ENCODE measurements at regions of chr7 and their contacts with region 1.

Region 1: DNA sequence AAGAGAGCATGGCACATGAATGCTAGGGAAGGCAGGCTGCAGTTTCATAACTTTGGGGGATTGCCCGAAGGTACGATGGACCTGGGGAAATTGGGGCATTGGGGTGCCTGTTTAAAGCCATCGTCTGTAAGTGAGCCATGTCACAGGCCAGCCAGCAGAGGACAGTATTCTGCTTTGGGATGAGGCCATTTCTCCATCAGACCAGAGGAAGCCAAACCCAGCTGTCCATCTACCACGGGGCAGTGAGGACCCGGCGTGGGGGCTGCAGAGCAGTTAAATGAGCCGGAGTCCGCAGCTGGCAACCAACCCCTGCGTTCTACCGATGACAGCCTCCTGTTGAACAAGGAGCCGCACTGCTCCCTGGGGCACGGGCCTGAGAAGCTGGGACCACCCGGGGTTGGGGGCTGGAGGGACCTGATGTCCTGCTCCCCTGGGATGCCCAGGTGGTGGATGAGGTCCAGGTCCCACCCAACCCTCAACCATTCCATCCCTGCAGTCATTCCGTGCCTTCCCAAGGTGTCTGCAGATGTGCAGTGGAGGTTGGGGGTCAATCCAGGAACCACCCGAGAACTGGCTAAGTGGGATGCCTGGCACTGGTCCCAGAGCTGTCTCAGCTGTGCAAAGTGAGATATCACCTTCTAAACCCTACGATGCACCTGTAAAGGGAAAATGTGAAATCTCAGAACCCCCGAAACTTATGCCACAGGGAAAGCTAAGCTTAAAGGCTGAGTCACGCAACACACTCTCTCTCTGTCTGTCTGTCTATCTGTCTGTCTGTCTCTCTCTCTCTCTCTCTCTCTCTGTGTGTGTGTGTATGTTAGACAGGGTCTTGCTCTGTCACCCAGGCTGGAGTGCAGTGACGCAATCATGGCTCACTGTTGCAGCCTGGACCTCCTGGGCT is 12.1 kb upstream of the RHBDD2 start:
- DNase-seq: peak; percentile 70
- ATAC-seq: peak; percentile 97
- H3K4me3 ChIP-seq: peak overlapping the region in 2 of 3 experiments; percentile 16 to 67; a peak in 3 of 6 replicates
- H3K27ac ChIP-seq: no peak overlapping the region
- H3K4me1 ChIP-seq: peaks cover 21% of the 10 kb centered on the region
- H3K27me3 ChIP-seq: no peaks in the 10 kb centered on the region
- CTCF ChIP-seq: peak; percentile 99
- EP300 ChIP-seq: peak in 1 of 2 experiments; percentile 22; a peak in 1 of 4 replicates
- POLR2A ChIP-seq: no peak
- RAD21 ChIP-seq: peak; percentile 96

Region 2: GRCh38 chr7:75920431-75921161 is 53.9 kb after region 1 on chr7:
- CTCF ChIA-PET with region 1: no interaction called
- POLR2A ChIA-PET with region 1: interaction called, 17 read pairs
- in situ Hi-C with region 1: no loop called
- intact Hi-C with region 1: loop called (anchors 2 kb)
- DNase-seq: peak; percentile 99
- ATAC-seq: peak; percentile 87
- H3K4me3 ChIP-seq: peak overlapping the region in 1 of 3 experiments; percentile 64; a peak in 2 of 6 replicates
- H3K27ac ChIP-seq: peak overlapping the region; percentile 90
- H3K4me1 ChIP-seq: peaks cover 88% of the 10 kb centered on the region
- H3K27me3 ChIP-seq: no peaks in the 10 kb centered on the region; a peak in 1 of 5 replicates
- CTCF ChIP-seq: no peak
- EP300 ChIP-seq: peak; percentile 94 to 96
- POLR2A ChIP-seq: peak in 1 of 2 experiments; percentile 77; a peak in 3 of 4 replicates
- RAD21 ChIP-seq: peak; percentile 50; the same call in 1 of the 2 replicates

Region 3: GRCh38 chr7:75962607-75963380 is 96.1 kb after region 1 on chr7:
- CTCF ChIA-PET with region 1: no interaction called
- POLR2A ChIA-PET with region 1: no interaction called
- in situ Hi-C with region 1: no loop called
- intact Hi-C with region 1: loop called (anchors 2 kb)
- DNase-seq: peak; percentile 79
- ATAC-seq: peak; percentile 64
- H3K4me3 ChIP-seq: no peak overlapping the region
- H3K27ac ChIP-seq: peak overlapping the region; percentile 71
- H3K4me1 ChIP-seq: peaks cover 58% of the 10 kb centered on the region
- H3K27me3 ChIP-seq: no peaks in the 10 kb centered on the region
- CTCF ChIP-seq: no peak
- EP300 ChIP-seq: peak in 1 of 2 experiments; percentile 87; a peak in 2 of 4 replicates
- POLR2A ChIP-seq: no peak
- RAD21 ChIP-seq: no peak

Region 4: DNA sequence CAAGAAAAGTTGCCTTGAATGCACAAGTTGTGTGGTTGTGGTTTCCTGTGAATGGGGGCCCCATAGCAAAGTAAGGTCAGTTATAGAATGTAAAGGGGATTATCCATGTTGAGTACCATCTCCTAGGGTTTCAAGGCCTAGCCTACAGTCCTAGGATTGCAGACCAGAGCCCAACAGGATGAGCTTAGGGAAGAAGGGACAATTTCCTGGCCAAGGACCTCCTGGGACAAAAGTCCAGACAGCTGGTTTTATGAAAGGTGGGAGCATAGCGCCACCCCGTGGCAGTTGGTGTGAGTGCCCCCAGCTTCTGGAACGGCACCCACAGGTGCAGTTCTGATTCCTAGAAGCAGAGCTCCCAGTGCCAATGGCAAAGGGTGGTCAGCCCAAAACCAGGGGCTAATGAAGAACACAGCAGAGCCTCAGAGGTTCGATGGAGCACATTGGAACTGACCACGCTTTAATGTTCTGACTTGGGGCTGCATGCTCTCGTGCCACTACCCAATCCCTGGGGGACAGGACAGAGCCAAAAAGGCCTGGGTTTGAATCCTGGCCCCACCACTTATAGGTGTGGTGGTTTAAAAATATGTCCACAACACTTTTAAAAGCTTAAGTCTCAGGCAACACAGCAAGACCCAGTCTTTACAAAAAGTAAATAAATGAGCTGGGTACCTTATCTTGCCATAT is 153.4 kb after region 1 on chr7:
- CTCF ChIA-PET with region 1: interaction called, 39 read pairs
- POLR2A ChIA-PET with region 1: interaction called, 13 read pairs
- in situ Hi-C with region 1: loop called (anchors 5 kb)
- intact Hi-C with region 1: loop called (anchors 1 kb)
- DNase-seq: peak; percentile 69
- ATAC-seq: peak; percentile 96
- H3K4me3 ChIP-seq: no peak overlapping the region
- H3K27ac ChIP-seq: no peak overlapping the region
- H3K4me1 ChIP-seq: peaks cover 8% of the 10 kb centered on the region
- H3K27me3 ChIP-seq: no peaks in the 10 kb centered on the region
- CTCF ChIP-seq: peak; percentile 98
- EP300 ChIP-seq: no peak
- POLR2A ChIP-seq: no peak
- RAD21 ChIP-seq: peak; percentile 93